ENCODE measurements at regions of chr4 and their contacts with region 1.

Region 1: GRCh38 chr4:113628711-113629110 is 132.8 kb downstream of the CAMK2D start:
- DNase-seq: no peak
- H3K4me3 ChIP-seq: no peak overlapping the region
- H3K27ac ChIP-seq: no peak overlapping the region
- H3K4me1 ChIP-seq: peaks cover 0 to 4% (median 0%) of the 10 kb centered on the region in 4 donors
- H3K27me3 ChIP-seq: no peaks in the 10 kb centered on the region
- CTCF ChIP-seq: no peak
- EP300 ChIP-seq: no peak
- POLR2A ChIP-seq: no peak

Region 2: GRCh38 chr4:113582737-113583136 is 46.0 kb before region 1 on chr4:
- in situ Hi-C with region 1: no loop called
- intact Hi-C with region 1: loop called (anchors 2 kb)
- DNase-seq: no peak
- H3K4me3 ChIP-seq: no peak overlapping the region
- H3K27ac ChIP-seq: no peak overlapping the region
- H3K4me1 ChIP-seq: peaks cover 0 to 27% (median 0%) of the 10 kb centered on the region in 4 donors
- H3K27me3 ChIP-seq: no peaks in the 10 kb centered on the region
- CTCF ChIP-seq: no peak
- EP300 ChIP-seq: no peak
- POLR2A ChIP-seq: no peak

Region 3: DNA sequence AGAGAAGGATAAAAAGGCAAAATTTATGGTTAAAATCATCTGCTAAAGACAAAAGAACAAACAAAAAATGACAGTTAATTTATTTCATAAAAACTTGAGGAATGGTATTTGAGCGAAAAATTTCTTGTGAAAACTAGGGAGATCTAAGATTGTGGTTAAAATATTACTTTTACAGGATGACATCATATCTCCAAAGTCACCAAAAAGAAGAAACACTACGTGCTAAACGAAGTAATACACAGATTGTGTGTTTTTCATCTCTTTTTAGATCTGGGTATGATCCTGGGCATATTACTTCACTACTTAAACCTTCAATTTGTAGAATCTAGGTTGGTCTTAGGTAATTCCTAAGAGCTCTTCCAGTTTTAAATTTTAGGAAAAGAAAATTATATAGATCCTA is 25.2 kb after region 1 on chr4:
- in situ Hi-C with region 1: no loop called
- intact Hi-C with region 1: no loop called
- DNase-seq: no peak
- H3K4me3 ChIP-seq: no peak overlapping the region
- H3K27ac ChIP-seq: no peak overlapping the region
- H3K4me1 ChIP-seq: peaks cover 0 to 17% (median 0%) of the 10 kb centered on the region in 4 donors
- H3K27me3 ChIP-seq: no peaks in the 10 kb centered on the region
- CTCF ChIP-seq: no peak
- EP300 ChIP-seq: no peak
- POLR2A ChIP-seq: no peak